Gastrocnemius medialis (tissue), 4 donors: ENCODE measurements at regions of chr14 and their contacts with region 1.

Region 1: DNA sequence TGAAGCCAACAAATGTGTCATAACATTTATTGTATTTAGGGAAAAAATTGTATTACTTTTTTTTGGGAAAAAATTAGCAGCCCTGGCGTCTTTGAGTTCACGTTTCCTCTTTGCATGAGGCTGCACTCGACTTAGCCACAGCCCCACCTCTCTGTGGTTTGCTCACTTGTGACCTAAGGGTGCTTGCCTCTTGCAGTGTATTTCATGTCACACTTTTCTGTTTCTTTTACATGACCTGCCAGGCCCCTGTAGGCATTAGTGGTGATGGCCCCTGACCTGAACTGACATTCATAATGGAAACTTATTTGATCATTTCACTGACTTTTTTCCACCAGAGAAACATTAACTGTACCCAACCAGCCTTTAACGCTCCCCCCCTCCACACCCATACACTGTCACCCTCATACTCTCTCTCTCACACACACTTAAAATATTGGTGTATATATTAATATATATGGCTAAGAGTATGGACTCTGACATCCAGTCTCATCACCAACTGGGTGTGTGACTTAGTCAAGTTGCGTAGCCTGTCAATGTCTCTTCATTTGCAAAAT is 122.9 kb downstream of the PRKCH start:
- DNase-seq: no peak
- ATAC-seq: no peak
- H3K4me3 ChIP-seq: no peak overlapping the region
- H3K27ac ChIP-seq: no peak overlapping the region
- H3K4me1 ChIP-seq: peaks cover 7 to 12% of the 10 kb centered on the region in 2 donors
- H3K27me3 ChIP-seq: no peaks in the 10 kb centered on the region
- CTCF ChIP-seq: no peak
- POLR2A ChIP-seq: no peak

Region 2: DNA sequence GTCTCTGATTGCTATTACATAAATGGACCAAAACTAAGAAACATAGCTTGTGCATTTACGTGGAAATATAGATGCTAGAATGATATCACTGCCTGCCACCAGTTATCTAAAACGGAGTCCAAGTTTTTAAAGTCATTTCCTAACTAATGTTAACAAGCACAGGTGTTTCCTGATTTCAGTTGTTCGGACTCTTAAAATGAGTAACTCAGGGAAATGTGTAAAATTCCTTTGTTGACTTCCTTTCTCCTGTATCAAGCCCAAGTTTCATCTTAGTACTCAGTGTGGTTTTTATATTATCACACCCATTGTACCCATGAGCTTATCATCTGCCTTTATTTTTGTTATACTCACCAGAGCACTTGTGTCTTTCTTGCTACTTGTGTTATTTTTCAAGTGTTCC is 136.1 kb before region 1 on chr14:
- in situ Hi-C with region 1: loop called in 1 of 4 experiments (anchors 10 kb)
- intact Hi-C with region 1: no loop called
- DNase-seq: no peak
- ATAC-seq: peak; percentile 51 to 58
- H3K4me3 ChIP-seq: no peak overlapping the region
- H3K27ac ChIP-seq: peak overlapping the region in 3 of 4 donors; percentile 4 to 52 (median 47)
- H3K4me1 ChIP-seq: no peaks in the 10 kb centered on the region
- H3K27me3 ChIP-seq: no peaks in the 10 kb centered on the region
- CTCF ChIP-seq: no peak
- POLR2A ChIP-seq: no peak